B cell (primary cell): ENCODE measurements at regions of chr21 and their contacts with region 1.

Region 1: GRCh38 chr21:42117229-42117966 is 46.3 kb downstream of the UMODL1 start:
- DNase-seq: peak; percentile 82
- ATAC-seq: peak; percentile 81
- H3K4me3 ChIP-seq: no peak overlapping the region
- H3K4me3 Mint-ChIP-seq: peak overlapping the region; percentile 38
- H3K27ac ChIP-seq: no peak overlapping the region
- H3K27ac Mint-ChIP-seq: no peak overlapping the region
- H3K4me1 ChIP-seq: peaks cover 42 to 44% of the 10 kb centered on the region in 2 donors
- H3K4me1 Mint-ChIP-seq: peaks cover 51% of the 10 kb centered on the region
- H3K27me3 ChIP-seq: peaks cover 0 to 63% (median 26%) of the 10 kb centered on the region in 4 experiments
- H3K27me3 Mint-ChIP-seq: peaks cover 37% of the 10 kb centered on the region
- CTCF ChIP-seq: peak; percentile 96

Region 2: GRCh38 chr21:41283211-41283818 is 834.1 kb before region 1 on chr21:
- CTCF ChIA-PET with region 1: interaction called, 27 read pairs
- POLR2A ChIA-PET with region 1: no interaction called
- intact Hi-C with region 1: loop called (anchors 5 kb)
- DNase-seq: peak; percentile 77
- ATAC-seq: peak; percentile 81
- H3K4me3 ChIP-seq: no peak overlapping the region
- H3K4me3 Mint-ChIP-seq: no peak overlapping the region
- H3K27ac ChIP-seq: no peak overlapping the region
- H3K27ac Mint-ChIP-seq: no peak overlapping the region
- H3K4me1 ChIP-seq: peaks cover 0 to 4% of the 10 kb centered on the region in 2 donors
- H3K4me1 Mint-ChIP-seq: peaks cover 2% of the 10 kb centered on the region
- H3K27me3 ChIP-seq: peaks cover 0 to 2% (median 0%) of the 10 kb centered on the region in 4 experiments
- H3K27me3 Mint-ChIP-seq: peaks cover 7% of the 10 kb centered on the region
- CTCF ChIP-seq: peak; percentile 93

Region 3: GRCh38 chr21:41879190-41879998 is 238.0 kb before region 1 on chr21 and contains the start of gene PRDM15:
- CTCF ChIA-PET with region 1: interaction called, 18 read pairs
- POLR2A ChIA-PET with region 1: no interaction called
- intact Hi-C with region 1: no loop called
- DNase-seq: peak; percentile 83
- ATAC-seq: peak; percentile 67
- H3K4me3 ChIP-seq: peak within 1 kb of the TSS; percentile 53 to 86 (median 81)
- H3K4me3 Mint-ChIP-seq: peak within 1 kb of the TSS; percentile 94
- H3K27ac ChIP-seq: peak within 1 kb of the TSS; percentile 76 to 80
- H3K27ac Mint-ChIP-seq: peak within 1 kb of the TSS; percentile 97
- H3K4me1 ChIP-seq: peaks cover 13 to 21% of the 10 kb centered on the region in 2 donors
- H3K4me1 Mint-ChIP-seq: peaks cover 35% of the 10 kb centered on the region
- H3K27me3 ChIP-seq: no peaks in the 10 kb centered on the region
- H3K27me3 Mint-ChIP-seq: no peaks in the 10 kb centered on the region
- CTCF ChIP-seq: no peak
- total RNA-seq, gene PRDM15: 20.7 and 21.3 TPM in 2 replicates

Region 4: GRCh38 chr21:41921021-41921420 is 196.4 kb before region 1 on chr21:
- CTCF ChIA-PET with region 1: interaction called, 12 read pairs
- POLR2A ChIA-PET with region 1: no interaction called
- intact Hi-C with region 1: no loop called
- DNase-seq: peak; percentile 54
- ATAC-seq: peak; percentile 68
- H3K4me3 ChIP-seq: no peak overlapping the region
- H3K4me3 Mint-ChIP-seq: peak overlapping the region; percentile 26
- H3K27ac ChIP-seq: peak overlapping the region in 1 of 2 donors; percentile 8
- H3K27ac Mint-ChIP-seq: peak overlapping the region; percentile 50
- H3K4me1 ChIP-seq: peaks cover 46 to 48% of the 10 kb centered on the region in 2 donors
- H3K4me1 Mint-ChIP-seq: peaks cover 44% of the 10 kb centered on the region
- H3K27me3 ChIP-seq: no peaks in the 10 kb centered on the region
- H3K27me3 Mint-ChIP-seq: no peaks in the 10 kb centered on the region
- CTCF ChIP-seq: no peak

Region 5: DNA sequence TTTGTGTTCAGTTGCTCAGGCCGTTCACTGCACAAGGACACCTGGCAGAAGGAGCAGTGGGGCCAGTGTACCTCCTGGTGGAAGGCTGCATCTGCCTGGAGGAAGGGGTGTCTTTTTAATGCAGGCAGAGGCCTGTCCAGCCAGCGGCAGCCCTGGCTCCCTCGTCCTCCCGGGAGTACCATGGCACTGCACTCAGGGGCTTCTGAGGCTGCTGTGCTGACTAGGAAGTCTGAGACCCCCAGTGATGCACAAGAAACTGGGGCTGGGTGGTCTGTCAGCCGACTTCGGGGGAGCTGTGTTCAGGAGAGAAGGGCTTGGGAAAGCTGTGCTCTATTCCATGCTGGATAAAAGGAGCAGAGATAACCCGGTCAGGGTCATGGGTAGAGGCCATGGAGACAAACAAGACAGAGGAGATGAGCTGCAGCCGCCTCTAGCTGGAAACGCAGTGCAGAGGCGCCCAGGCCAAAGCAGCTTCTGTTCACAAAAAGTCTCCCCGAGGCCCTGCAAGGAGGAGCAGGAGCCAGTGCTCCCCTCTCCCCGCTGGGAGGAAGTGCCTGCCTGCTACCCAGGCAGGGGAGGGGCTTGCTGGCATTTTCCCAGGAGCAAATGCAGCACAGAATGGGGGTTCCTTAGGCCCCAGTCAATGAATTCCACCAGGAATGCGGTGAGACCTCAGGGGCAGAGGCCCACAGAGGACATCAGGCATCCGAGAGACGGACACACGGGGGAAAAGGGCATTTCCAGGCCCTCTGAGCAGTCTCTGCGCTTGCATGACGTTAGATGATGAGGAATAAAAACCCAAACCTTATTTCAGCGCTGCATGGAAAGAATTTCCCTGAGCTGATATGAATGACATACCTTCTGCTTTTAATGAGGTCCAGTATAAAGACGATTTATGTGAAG is 146.4 kb before region 1 on chr21:
- CTCF ChIA-PET with region 1: interaction called, 10 read pairs
- POLR2A ChIA-PET with region 1: no interaction called
- intact Hi-C with region 1: no loop called
- DNase-seq: no peak
- ATAC-seq: no peak
- H3K4me3 ChIP-seq: no peak overlapping the region
- H3K4me3 Mint-ChIP-seq: no peak overlapping the region
- H3K27ac ChIP-seq: no peak overlapping the region
- H3K27ac Mint-ChIP-seq: no peak overlapping the region
- H3K4me1 ChIP-seq: peaks cover 10% of the 10 kb centered on the region in 2 donors
- H3K4me1 Mint-ChIP-seq: peaks cover 11% of the 10 kb centered on the region
- H3K27me3 ChIP-seq: no peaks in the 10 kb centered on the region
- H3K27me3 Mint-ChIP-seq: peaks cover 1% of the 10 kb centered on the region
- CTCF ChIP-seq: no peak

Region 6: DNA sequence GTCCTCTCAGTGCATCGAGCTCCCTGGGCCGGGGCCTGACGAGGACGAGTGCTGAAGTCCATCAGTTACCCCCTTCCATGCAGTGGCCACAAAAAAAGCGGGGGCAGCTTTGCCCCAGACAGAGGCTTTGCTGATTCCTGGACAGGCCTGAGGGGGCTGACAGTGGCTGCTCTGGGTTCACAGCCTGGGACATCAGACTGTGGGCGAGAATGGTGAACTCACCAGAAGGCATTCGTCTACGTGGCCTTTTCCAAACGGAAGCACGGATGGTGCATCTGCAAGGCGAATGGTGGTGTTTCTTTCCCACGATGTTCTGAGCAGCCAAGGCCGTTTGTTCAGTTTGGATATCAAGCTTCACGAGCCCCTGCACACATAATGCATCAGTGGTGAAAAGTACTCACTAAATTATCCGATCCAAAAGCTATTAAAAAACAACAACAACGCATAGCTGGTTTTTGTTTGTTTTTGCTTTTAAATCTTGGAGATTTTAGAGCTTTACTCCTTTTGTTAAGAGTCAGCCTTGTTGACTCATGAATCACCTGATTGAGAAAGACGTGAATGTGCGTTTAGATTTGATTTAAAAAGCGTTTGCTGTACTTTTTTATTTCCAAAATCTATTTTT is 100.9 kb before region 1 on chr21:
- CTCF ChIA-PET with region 1: interaction called, 10 read pairs
- POLR2A ChIA-PET with region 1: interaction called, 5 read pairs
- intact Hi-C with region 1: no loop called
- DNase-seq: no peak
- ATAC-seq: no peak
- H3K4me3 ChIP-seq: no peak overlapping the region
- H3K4me3 Mint-ChIP-seq: no peak overlapping the region
- H3K27ac ChIP-seq: no peak overlapping the region
- H3K27ac Mint-ChIP-seq: no peak overlapping the region
- H3K4me1 ChIP-seq: no peaks in the 10 kb centered on the region
- H3K4me1 Mint-ChIP-seq: peaks cover 5% of the 10 kb centered on the region
- H3K27me3 ChIP-seq: no peaks in the 10 kb centered on the region
- H3K27me3 Mint-ChIP-seq: peaks cover 7% of the 10 kb centered on the region
- CTCF ChIP-seq: no peak